ENCODE measurements at regions of chr5 and their contacts with region 1.

Region 1: DNA sequence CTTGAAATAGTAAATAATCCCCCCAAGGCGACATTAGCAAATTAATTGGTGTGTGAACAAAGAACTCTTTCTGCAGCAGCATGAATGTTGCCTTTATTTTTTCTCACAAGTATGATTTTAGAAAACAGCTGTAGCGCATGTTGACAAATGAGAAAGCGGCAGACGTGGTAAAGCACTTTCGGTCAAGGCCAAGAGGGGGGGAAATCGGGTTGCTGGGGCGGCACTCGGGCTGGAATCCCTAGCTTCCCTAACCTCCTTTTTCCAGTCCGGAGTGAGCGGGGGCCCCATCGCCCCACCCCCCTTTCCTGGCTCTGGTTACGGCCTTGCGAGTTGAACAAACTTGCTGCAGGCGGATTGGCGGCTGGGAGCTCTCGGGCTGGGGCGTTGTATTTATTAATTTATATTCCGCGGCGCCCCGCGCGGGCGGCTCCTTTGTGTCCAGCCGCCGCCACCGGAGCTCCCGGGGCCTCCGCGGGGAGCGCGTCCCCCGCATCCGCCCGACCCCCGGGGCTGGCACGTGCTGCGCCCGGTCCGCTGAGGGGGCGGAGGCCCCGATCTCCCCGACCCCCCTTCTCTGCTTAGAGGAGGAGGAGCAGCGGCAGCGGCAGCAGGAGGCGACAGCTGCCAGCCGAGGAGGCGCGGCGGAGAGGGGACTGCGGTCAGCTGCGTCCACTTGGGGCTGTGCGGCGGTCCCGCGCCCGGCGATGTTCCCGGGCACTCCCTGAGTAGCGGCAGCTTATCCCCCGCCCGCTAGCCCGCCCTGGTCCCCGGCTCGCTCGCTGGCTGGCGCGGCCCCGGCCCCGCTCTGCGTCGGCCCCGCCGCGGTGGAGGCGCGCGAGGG is at the start of gene RHOBTB3:
- DNase-seq: peak; percentile 90 to 94
- H3K4me3 ChIP-seq: peak within 1 kb of the TSS; percentile 97
- H3K4me3 Mint-ChIP-seq: peak within 1 kb of the TSS; percentile 96
- H3K27ac Mint-ChIP-seq: peak within 1 kb of the TSS; percentile 94
- H3K4me1 ChIP-seq: peaks cover 55% of the 10 kb centered on the region
- H3K4me1 Mint-ChIP-seq: peaks cover 38% of the 10 kb centered on the region
- H3K27me3 ChIP-seq: no peaks in the 10 kb centered on the region
- H3K27me3 Mint-ChIP-seq: no peaks in the 10 kb centered on the region
- CTCF ChIP-seq: peak in 1 of 2 experiments; percentile 3
- total RNA-seq, gene RHOBTB3: 85.6 and 88.5 TPM in 2 replicates

Region 2: GRCh38 chr5:95631991-95632675 is 98.8 kb before region 1 on chr5:
- CTCF ChIA-PET with region 1: no interaction called
- POLR2A ChIA-PET with region 1: no interaction called
- intact Hi-C with region 1: no loop called
- DNase-seq: no peak
- H3K4me3 ChIP-seq: no peak overlapping the region
- H3K4me3 Mint-ChIP-seq: no peak overlapping the region
- H3K27ac Mint-ChIP-seq: no peak overlapping the region
- H3K4me1 ChIP-seq: peaks cover 4% of the 10 kb centered on the region; the same call in 1 of the 2 replicates
- H3K4me1 Mint-ChIP-seq: peaks cover 11% of the 10 kb centered on the region
- H3K27me3 ChIP-seq: no peaks in the 10 kb centered on the region
- H3K27me3 Mint-ChIP-seq: no peaks in the 10 kb centered on the region
- CTCF ChIP-seq: no peak

Region 3: GRCh38 chr5:95664204-95664786 is 66.7 kb before region 1 on chr5:
- CTCF ChIA-PET with region 1: interaction called, 6 read pairs
- POLR2A ChIA-PET with region 1: no interaction called
- intact Hi-C with region 1: loop called (anchors 1 kb)
- DNase-seq: peak in 1 of 2 experiments; percentile 23
- H3K4me3 ChIP-seq: no peak overlapping the region
- H3K4me3 Mint-ChIP-seq: no peak overlapping the region
- H3K27ac Mint-ChIP-seq: no peak overlapping the region
- H3K4me1 ChIP-seq: 0 out of 2 replicates have a peak, but pooled peaks cover 4% of the 10 kb centered on the region
- H3K4me1 Mint-ChIP-seq: no peaks in the 10 kb centered on the region
- H3K27me3 ChIP-seq: no peaks in the 10 kb centered on the region
- H3K27me3 Mint-ChIP-seq: no peaks in the 10 kb centered on the region
- CTCF ChIP-seq: peak; percentile 78 to 81

Region 4: GRCh38 chr5:95686651-95687050 is 44.3 kb before region 1 on chr5:
- CTCF ChIA-PET with region 1: interaction called, 3 read pairs
- POLR2A ChIA-PET with region 1: no interaction called
- intact Hi-C with region 1: loop called (anchors 1 kb)
- DNase-seq: peak in 1 of 2 experiments; percentile 17
- H3K4me3 ChIP-seq: no peak overlapping the region
- H3K4me3 Mint-ChIP-seq: no peak overlapping the region
- H3K27ac Mint-ChIP-seq: no peak overlapping the region
- H3K4me1 ChIP-seq: no peaks in the 10 kb centered on the region; the same call in 1 of the 2 replicates
- H3K4me1 Mint-ChIP-seq: no peaks in the 10 kb centered on the region
- H3K27me3 ChIP-seq: no peaks in the 10 kb centered on the region
- H3K27me3 Mint-ChIP-seq: no peaks in the 10 kb centered on the region
- CTCF ChIP-seq: no peak

Region 5: GRCh38 chr5:95712347-95712958 is 18.5 kb before region 1 on chr5:
- CTCF ChIA-PET with region 1: no interaction called
- POLR2A ChIA-PET with region 1: interaction called, 8 read pairs
- intact Hi-C with region 1: loop called (anchors 1 kb)
- DNase-seq: peak; percentile 83 to 95
- H3K4me3 ChIP-seq: no peak overlapping the region
- H3K4me3 Mint-ChIP-seq: peak overlapping the region; percentile 52
- H3K27ac Mint-ChIP-seq: peak overlapping the region; percentile 98
- H3K4me1 ChIP-seq: peaks cover 61% of the 10 kb centered on the region
- H3K4me1 Mint-ChIP-seq: peaks cover 46% of the 10 kb centered on the region
- H3K27me3 ChIP-seq: no peaks in the 10 kb centered on the region
- H3K27me3 Mint-ChIP-seq: no peaks in the 10 kb centered on the region
- CTCF ChIP-seq: no peak